CD4-positive, alpha-beta memory T cell (primary cell): ENCODE measurements at regions of chr4 and their contacts with region 1.

Region 1: DNA sequence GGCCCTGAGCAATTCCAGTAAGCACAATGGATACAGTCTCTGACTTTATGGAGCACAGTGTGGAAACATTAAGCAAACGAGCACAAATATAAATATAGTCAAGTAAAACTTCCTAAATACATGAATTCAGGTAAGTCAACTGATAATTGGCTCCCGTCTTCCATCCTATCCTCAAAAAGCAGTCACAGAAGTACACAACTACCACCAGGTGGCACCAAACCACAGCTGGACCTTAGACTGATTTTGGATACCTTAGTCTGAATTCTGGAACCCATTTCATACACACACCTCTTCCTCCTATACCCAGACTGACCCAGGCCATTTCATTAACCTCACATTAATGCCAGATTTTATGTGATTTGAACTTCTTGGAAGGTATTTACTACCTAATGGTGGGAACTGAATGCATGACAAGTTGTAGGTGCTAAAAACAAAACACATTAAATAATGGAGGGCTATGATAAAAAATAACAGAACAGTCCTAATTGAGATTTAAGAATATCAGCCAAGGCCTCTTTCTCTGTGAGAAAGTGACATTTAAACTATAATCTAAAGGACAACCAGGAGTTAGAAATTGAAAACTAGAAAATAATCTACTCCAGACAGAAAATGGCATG is 77.5 kb downstream of the ELF2 start:
- DNase-seq: peak; percentile 70 to 78 (median 73)
- H3K4me3 ChIP-seq: no peak overlapping the region
- H3K4me3 Mint-ChIP-seq: no peak overlapping the region
- H3K27ac ChIP-seq: no peak overlapping the region
- H3K27ac Mint-ChIP-seq: peak overlapping the region in 1 of 7 donors; percentile 43
- H3K4me1 ChIP-seq: no peaks in the 10 kb centered on the region
- H3K4me1 Mint-ChIP-seq: peaks cover 0 to 6% (median 3%) of the 10 kb centered on the region in 4 donors
- H3K27me3 ChIP-seq: no peaks in the 10 kb centered on the region
- H3K27me3 Mint-ChIP-seq: no peaks in the 10 kb centered on the region

Region 2: DNA sequence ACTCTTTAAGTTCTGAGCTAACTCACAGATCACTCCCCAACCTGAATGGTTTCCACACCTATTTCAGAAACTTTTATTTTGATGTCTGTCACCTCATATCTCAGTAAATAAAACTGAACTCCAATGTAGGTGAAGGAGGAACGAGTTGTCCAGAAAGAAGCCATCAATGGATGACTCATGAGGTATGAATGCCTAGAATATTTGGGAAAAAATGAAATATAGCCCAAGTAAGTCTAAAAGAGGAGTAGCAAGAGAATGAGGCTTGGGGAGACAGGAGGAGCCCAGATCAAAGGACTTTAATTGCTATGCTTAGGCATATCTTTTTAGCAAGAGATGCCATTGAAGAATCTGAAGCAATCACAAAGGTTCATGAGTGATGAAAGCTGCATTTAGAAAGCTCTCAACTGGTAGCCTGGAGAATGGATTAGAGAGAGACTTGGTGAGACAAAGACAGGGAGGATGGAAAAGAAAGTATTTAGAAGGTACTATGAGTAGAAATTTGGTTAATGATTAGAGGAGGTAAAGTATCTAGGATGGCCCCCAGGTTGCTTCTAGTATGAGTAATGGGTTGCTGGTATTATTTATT is 44.6 kb before region 1 on chr4:
- CTCF ChIA-PET with region 1: no interaction called
- POLR2A ChIA-PET with region 1: no interaction called
- intact Hi-C with region 1: no loop called
- DNase-seq: no peak
- H3K4me3 ChIP-seq: no peak overlapping the region
- H3K4me3 Mint-ChIP-seq: no peak overlapping the region
- H3K27ac ChIP-seq: no peak overlapping the region
- H3K27ac Mint-ChIP-seq: peak overlapping the region in 4 of 7 donors; percentile 49 to 75 (median 64)
- H3K4me1 ChIP-seq: peaks cover 9% of the 10 kb centered on the region
- H3K4me1 Mint-ChIP-seq: peaks cover 20 to 46% (median 31%) of the 10 kb centered on the region in 4 donors
- H3K27me3 ChIP-seq: no peaks in the 10 kb centered on the region
- H3K27me3 Mint-ChIP-seq: no peaks in the 10 kb centered on the region

Region 3: GRCh38 chr4:139144161-139144859 is 44.8 kb after region 1 on chr4:
- CTCF ChIA-PET with region 1: no interaction called
- POLR2A ChIA-PET with region 1: no interaction called
- intact Hi-C with region 1: no loop called
- DNase-seq: no peak
- H3K4me3 ChIP-seq: no peak overlapping the region
- H3K4me3 Mint-ChIP-seq: no peak overlapping the region
- H3K27ac ChIP-seq: no peak overlapping the region
- H3K27ac Mint-ChIP-seq: no peak overlapping the region
- H3K4me1 ChIP-seq: peaks cover 22% of the 10 kb centered on the region
- H3K4me1 Mint-ChIP-seq: peaks cover 16 to 58% (median 38%) of the 10 kb centered on the region in 4 donors
- H3K27me3 ChIP-seq: no peaks in the 10 kb centered on the region
- H3K27me3 Mint-ChIP-seq: no peaks in the 10 kb centered on the region

Region 4: GRCh38 chr4:139177868-139178611 is 78.6 kb after region 1 on chr4:
- CTCF ChIA-PET with region 1: interaction called, 10 read pairs
- POLR2A ChIA-PET with region 1: no interaction called
- intact Hi-C with region 1: loop called (anchors 2 kb)
- DNase-seq: peak; percentile 92 to 94 (median 92)
- H3K4me3 ChIP-seq: peak overlapping the region; percentile 88 to 89
- H3K4me3 Mint-ChIP-seq: peak overlapping the region; percentile 89 to 94 (median 92)
- H3K27ac ChIP-seq: peak overlapping the region; percentile 96
- H3K27ac Mint-ChIP-seq: peak overlapping the region; percentile 92 to 97 (median 96)
- H3K4me1 ChIP-seq: peaks cover 17% of the 10 kb centered on the region
- H3K4me1 Mint-ChIP-seq: peaks cover 14 to 29% (median 18%) of the 10 kb centered on the region in 4 donors
- H3K27me3 ChIP-seq: no peaks in the 10 kb centered on the region
- H3K27me3 Mint-ChIP-seq: no peaks in the 10 kb centered on the region

Region 5: GRCh38 chr4:139416073-139416673 is 316.7 kb after region 1 on chr4:
- CTCF ChIA-PET with region 1: no interaction called
- POLR2A ChIA-PET with region 1: no interaction called
- intact Hi-C with region 1: loop called (anchors 1 kb)
- DNase-seq: peak in 4 of 5 donors; percentile 28 to 47 (median 42)
- H3K4me3 ChIP-seq: no peak overlapping the region
- H3K4me3 Mint-ChIP-seq: no peak overlapping the region
- H3K27ac ChIP-seq: no peak overlapping the region
- H3K27ac Mint-ChIP-seq: no peak overlapping the region
- H3K4me1 ChIP-seq: no peaks in the 10 kb centered on the region
- H3K4me1 Mint-ChIP-seq: peaks cover 4 to 17% (median 5%) of the 10 kb centered on the region in 4 donors
- H3K27me3 ChIP-seq: no peaks in the 10 kb centered on the region
- H3K27me3 Mint-ChIP-seq: no peaks in the 10 kb centered on the region

Region 6: DNA sequence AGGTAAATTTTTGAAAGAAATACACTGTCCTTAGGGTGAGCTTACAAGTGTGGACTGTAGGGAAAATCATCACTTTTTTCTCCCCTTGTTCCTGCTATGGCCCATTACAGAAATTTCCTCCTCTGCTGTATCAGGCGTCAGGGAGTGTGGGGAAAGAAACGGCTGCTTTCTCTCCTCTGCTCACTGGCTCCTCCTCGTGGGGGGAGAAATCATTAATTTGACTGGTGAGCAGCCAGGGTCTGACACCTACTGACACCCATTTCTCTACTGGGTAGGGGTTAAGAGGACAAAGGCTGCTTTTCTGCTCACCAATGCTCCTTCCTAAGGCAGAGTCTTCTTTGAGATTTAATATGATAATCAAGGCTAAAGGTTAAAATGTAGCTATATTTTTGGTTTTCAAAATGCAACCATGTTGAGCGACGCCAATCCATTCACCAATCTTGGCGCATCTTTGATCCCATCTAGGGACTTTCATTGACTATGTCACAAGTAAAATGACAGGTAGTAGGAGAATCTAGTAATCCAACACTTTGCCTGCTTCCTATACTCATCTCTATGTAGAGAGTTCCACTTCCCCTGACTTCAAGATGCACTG is 431.5 kb after region 1 on chr4:
- CTCF ChIA-PET with region 1: no interaction called
- POLR2A ChIA-PET with region 1: no interaction called
- intact Hi-C with region 1: loop called (anchors 1 kb)
- DNase-seq: peak; percentile 41 to 62 (median 57)
- H3K4me3 ChIP-seq: no peak overlapping the region
- H3K4me3 Mint-ChIP-seq: peak overlapping the region in 1 of 8 donors; percentile 27
- H3K27ac ChIP-seq: no peak overlapping the region
- H3K27ac Mint-ChIP-seq: peak overlapping the region in 4 of 7 donors; percentile 24 to 81 (median 61)
- H3K4me1 ChIP-seq: peaks cover 8% of the 10 kb centered on the region
- H3K4me1 Mint-ChIP-seq: peaks cover 8 to 17% (median 14%) of the 10 kb centered on the region in 4 donors
- H3K27me3 ChIP-seq: no peaks in the 10 kb centered on the region
- H3K27me3 Mint-ChIP-seq: no peaks in the 10 kb centered on the region